Activated CD4-positive, alpha-beta memory T cell treated with anti-CD3 and anti-CD28 coated beads, Interleukin-2, amount 10 ng/mL, durations not matched to agents 7 days and 5 days (primary cell): ENCODE measurements at regions of chr1 and their contacts with region 1.

Region 1: DNA sequence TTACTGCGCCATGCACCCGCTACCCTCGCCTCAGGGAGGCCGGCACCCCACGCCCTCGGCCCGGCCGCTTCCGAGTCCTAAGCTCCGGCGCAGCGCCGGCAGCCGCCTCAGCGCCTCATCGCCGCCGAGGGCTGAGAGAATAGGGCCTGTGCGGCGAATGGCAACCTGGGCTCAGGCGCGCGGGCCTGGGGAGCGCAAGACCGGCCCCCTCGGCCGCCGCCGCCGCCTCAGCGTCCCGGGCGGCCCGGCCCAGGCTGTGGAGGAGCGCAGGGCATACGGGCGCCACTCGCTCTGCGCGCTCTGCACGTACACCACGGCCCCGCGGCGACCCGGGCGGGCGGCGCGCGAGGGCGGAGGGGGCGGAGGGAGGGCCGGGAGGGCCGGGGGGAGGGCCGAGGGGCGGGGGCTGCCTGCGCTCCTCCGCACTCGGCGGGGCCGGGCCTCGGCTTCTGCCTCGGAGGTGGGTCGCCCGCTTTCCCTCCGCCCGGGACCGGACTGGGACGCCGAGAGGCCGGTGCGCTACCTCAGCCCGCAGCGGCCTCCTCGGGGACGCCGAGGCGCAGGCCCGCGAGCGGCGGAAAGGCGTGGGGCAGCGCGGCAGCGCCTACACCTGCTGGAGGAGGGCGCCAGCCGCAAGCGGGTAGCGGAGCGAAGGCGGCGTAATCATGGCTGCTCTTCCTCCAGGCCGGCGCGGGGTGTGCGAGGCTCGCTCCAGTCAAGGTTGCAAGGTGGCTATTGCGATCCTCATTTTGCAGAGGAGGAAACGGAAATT is at the start of gene EGLN1:
- DNase-seq: peak; percentile 87
- H3K4me3 Mint-ChIP-seq: peak within 1 kb of the TSS; percentile 92
- H3K27ac Mint-ChIP-seq: peak within 1 kb of the TSS; percentile 90
- H3K4me1 Mint-ChIP-seq: peaks cover 36% of the 10 kb centered on the region
- H3K27me3 Mint-ChIP-seq: peaks cover 19% of the 10 kb centered on the region
- total RNA-seq, gene EGLN1: 38.8 to 38.9 TPM

Region 2: DNA sequence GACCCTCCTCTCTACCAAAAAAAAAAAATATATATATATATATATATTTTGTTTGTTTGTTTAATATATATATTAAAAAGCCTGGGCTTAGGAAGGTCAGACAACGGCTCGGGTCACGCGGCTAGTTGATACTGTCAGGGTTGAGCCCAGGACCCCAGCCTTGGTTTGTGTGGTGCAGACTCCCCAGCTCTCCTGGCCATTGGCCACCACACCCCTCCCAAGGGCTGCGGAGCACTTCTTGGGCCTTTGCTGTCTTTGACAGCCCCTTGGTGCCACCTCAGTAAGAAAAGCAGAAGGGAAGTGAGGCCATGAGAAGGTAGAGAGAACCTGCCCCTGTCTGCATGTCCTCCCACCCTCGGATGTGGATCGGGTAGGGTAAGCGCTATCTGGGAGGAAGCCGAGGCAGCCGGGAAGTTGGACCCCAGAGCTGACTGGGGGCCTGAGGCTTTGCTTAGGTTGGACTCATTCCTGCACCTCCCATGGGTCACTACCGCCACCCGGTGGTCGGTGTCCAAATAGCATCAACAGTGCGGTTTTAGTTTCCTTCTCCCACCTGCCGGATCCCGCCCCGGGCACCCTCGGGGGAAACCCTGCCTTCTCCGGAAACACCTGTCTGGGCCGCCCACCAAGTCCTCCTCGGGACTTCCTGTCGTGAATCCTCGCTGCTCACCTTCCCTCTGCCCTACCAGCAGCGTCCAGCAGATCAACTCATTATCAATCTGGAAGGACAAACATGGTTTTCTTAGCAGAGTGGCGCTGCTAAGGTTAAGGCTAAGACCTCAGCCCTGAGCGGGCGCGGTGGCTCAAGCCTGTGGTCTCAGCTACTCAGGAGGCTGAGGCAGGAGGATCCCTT is 210.9 kb before region 1 on chr1:
- CTCF ChIA-PET with region 1: no interaction called
- POLR2A ChIA-PET with region 1: no interaction called
- DNase-seq: peak; percentile 89
- H3K4me3 Mint-ChIP-seq: peak overlapping the region; percentile 72
- H3K27ac Mint-ChIP-seq: no peak overlapping the region
- H3K4me1 Mint-ChIP-seq: peaks cover 12% of the 10 kb centered on the region
- H3K27me3 Mint-ChIP-seq: peaks cover 5% of the 10 kb centered on the region

Region 3: GRCh38 chr1:231295938-231296337 is 126.2 kb before region 1 on chr1:
- CTCF ChIA-PET with region 1: no interaction called
- POLR2A ChIA-PET with region 1: no interaction called
- DNase-seq: no peak
- H3K4me3 Mint-ChIP-seq: no peak overlapping the region
- H3K27ac Mint-ChIP-seq: no peak overlapping the region
- H3K4me1 Mint-ChIP-seq: no peaks in the 10 kb centered on the region
- H3K27me3 Mint-ChIP-seq: no peaks in the 10 kb centered on the region

Region 4: DNA sequence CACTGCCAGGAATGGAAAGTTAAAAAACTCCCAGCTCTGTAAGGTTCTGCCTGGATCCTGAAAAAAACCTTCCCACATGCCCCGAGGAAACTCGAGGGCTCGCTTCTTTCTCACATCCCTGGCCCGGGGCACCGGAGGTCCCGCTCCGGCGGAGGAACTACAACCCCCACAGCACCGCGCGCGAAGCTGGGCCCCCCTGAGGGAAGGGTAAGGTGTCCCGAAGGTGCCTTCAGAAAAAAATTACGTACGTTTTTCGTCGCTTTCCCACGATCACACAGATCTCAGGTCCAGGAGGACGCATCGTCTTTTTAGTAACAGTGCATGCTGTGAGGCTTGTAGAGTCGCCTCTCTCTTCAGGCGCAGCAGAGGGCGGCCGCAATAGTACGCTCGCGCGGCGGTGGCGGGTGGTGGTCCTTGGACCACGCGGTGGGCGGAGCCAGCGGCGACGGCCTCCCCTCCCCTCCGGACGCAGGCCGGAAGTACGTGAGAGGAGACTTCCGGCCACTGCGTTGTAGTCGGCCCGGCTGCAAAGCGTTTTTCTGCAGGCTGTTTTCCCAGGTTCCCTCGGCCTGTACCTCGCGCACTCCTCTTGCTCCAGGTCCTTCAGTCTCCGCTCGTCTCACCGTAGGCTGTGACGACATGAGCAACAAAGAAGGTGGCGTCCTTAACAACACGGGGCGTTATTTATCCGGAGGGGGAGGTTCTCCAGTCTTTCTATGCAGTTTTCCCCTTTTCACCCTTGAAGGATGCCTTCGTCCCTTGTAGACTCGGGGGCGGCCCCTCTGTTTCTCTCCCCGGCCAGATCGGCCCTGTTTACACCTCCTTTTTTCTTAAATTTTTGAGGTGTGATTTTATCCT is 106.2 kb after region 1 on chr1 and contains the start of gene TSNAX:
- CTCF ChIA-PET with region 1: interaction called, 4 read pairs
- POLR2A ChIA-PET with region 1: interaction called, 23 read pairs
- DNase-seq: peak; percentile 91
- H3K4me3 Mint-ChIP-seq: peak within 1 kb of the TSS; percentile 93
- H3K27ac Mint-ChIP-seq: peak within 1 kb of the TSS; percentile 95
- H3K4me1 Mint-ChIP-seq: peaks cover 39% of the 10 kb centered on the region
- H3K27me3 Mint-ChIP-seq: no peaks in the 10 kb centered on the region
- total RNA-seq, gene TSNAX: 44.4 to 48.7 TPM

Region 5: GRCh38 chr1:231684356-231685244 is 262.4 kb after region 1 on chr1:
- CTCF ChIA-PET with region 1: no interaction called
- POLR2A ChIA-PET with region 1: no interaction called
- DNase-seq: no peak
- H3K4me3 Mint-ChIP-seq: no peak overlapping the region
- H3K27ac Mint-ChIP-seq: no peak overlapping the region
- H3K4me1 Mint-ChIP-seq: peaks cover under 1% of the 10 kb centered on the region
- H3K27me3 Mint-ChIP-seq: no peaks in the 10 kb centered on the region